ENCODE measurements at regions of chr13 and their contacts with region 1.

Region 1: DNA sequence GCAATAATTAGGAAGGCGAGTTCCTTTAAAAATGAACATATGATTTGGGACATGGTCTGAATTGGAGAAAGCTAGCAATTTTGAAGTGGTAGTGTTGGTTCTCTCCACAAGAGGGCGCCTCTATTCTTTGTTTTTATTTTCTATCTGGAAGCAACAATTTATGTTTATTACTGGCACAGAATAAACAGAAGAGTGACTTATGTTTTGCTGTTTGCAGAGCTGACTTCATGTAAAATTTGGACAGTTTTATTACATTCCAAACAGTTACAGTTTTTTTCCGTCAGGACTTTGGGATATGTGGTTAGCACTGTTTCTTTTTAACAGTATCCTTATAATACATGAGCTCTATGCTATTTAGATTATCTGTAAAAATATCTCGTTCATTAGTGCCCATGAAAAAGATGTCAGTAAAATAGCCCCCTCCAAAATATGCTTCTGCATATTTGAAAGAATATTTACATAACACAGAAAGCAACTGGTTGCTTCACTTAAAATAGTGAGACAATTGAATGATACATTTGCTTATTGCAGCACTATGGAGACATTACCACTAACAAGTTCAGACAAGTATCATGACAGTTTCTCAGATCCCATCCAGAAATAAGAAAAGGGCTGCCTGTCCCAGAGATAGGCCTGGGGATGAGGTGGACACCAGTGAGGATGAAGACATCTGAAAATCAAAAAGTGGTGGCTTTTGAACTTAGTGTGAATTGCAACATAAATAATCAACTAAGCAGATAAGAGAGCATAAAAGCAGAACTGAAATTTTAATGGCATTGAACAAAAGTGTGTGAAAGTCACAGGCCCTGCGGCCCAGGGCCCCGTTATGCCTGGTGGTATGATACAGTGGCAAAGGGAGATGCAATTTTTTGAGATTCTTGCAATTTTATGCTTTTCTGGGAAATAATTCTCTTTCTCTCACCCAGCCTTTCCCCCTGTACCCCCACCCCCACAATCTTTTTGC is 32.3 kb upstream of the FGF9 start:
- DNase-seq: no peak
- ATAC-seq: peak; percentile 38; the same call in 1 of the 3 replicates
- H3K4me3 ChIP-seq: no peak overlapping the region
- H3K27ac ChIP-seq: no peak overlapping the region
- H3K4me1 ChIP-seq: peaks cover 21% of the 10 kb centered on the region
- H3K27me3 ChIP-seq: no peaks in the 10 kb centered on the region
- CTCF ChIP-seq: peak; percentile 65
- EP300 ChIP-seq: no peak
- POLR2A ChIP-seq: no peak
- RAD21 ChIP-seq: no peak

Region 2: DNA sequence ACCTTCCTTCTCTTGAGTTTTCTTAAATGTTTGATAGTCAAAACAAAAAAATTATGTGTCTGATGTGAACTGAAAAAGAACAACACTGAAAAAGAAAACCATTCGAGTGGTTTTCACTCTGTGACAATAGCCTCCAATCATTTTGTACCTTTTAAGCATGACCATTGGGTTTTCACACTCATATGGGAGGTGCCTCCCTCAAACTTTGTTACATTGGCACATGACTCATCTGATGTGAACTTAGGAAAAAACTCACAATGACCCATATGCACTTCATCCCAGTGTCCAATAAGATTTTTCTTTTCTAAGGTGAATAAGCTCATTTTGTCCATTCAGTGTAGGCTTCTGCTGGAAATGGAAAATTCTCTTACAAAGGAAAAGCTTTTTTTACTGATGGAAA is 669.4 kb before region 1 on chr13:
- CTCF ChIA-PET with region 1: no interaction called
- POLR2A ChIA-PET with region 1: no interaction called
- in situ Hi-C with region 1: no loop called
- intact Hi-C with region 1: no loop called
- DNase-seq: no peak
- ATAC-seq: no peak
- H3K4me3 ChIP-seq: no peak overlapping the region
- H3K27ac ChIP-seq: no peak overlapping the region
- H3K4me1 ChIP-seq: peaks cover 24% of the 10 kb centered on the region
- H3K27me3 ChIP-seq: no peaks in the 10 kb centered on the region
- CTCF ChIP-seq: no peak
- EP300 ChIP-seq: no peak
- POLR2A ChIP-seq: no peak
- RAD21 ChIP-seq: no peak

Region 3: GRCh38 chr13:21670883-21671619 is 32.5 kb after region 1 on chr13 and contains the start of gene FGF9:
- CTCF ChIA-PET with region 1: no interaction called
- POLR2A ChIA-PET with region 1: no interaction called
- in situ Hi-C with region 1: no loop called
- intact Hi-C with region 1: loop called (anchors 5 kb)
- DNase-seq: peak; percentile 31
- ATAC-seq: peak; percentile 92
- H3K4me3 ChIP-seq: peak within 1 kb of the TSS; percentile 35 to 69 (median 55)
- H3K27ac ChIP-seq: no peak within 1 kb of the TSS
- H3K4me1 ChIP-seq: peaks cover 47% of the 10 kb centered on the region
- H3K27me3 ChIP-seq: peaks cover 15 to 76% of the 10 kb centered on the region in 2 experiments; a peak in 4 of 5 replicates
- CTCF ChIP-seq: no peak
- EP300 ChIP-seq: no peak
- POLR2A ChIP-seq: no peak
- RAD21 ChIP-seq: no peak; the same call in 1 of the 2 replicates
- total RNA-seq, gene FGF9: not detected in 2 replicates

Region 4: DNA sequence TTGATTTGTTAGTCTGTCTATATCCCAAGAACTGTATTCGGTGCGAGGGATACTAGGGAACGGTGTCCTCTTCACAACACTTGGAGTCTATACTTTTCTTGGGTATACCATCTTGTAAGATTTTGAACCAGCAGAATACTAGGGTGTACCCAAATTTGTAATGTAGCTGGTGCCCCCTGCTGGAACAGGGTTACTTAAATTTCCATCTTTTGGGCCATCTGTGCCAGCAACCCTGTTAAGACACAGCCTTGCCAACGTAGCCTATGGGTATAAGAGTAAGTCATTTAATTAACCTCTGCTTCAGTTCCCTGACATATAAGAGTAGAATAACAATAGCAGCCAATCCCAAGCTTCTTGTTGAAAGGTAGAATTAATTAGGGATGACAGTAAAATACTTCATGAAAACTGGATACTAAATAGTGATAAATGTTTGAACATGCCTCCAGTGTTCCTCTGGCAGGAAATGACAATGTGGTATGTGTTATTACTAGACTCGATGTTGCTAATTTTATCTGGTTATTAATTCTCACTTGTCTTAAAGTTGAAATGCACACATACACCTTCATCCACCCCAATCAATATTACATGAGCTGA is 639.8 kb after region 1 on chr13:
- CTCF ChIA-PET with region 1: no interaction called
- POLR2A ChIA-PET with region 1: no interaction called
- in situ Hi-C with region 1: loop called (anchors 25 kb)
- intact Hi-C with region 1: no loop called
- DNase-seq: peak; percentile 2
- ATAC-seq: no peak
- H3K4me3 ChIP-seq: no peak overlapping the region
- H3K27ac ChIP-seq: no peak overlapping the region
- H3K4me1 ChIP-seq: no peaks in the 10 kb centered on the region
- H3K27me3 ChIP-seq: no peaks in the 10 kb centered on the region
- CTCF ChIP-seq: peak; percentile 50
- EP300 ChIP-seq: no peak
- POLR2A ChIP-seq: no peak
- RAD21 ChIP-seq: no peak

Measured in HepG2 (cell line).